ENCODE measurements at regions of chr15 and their contacts with region 1.

Region 1: DNA sequence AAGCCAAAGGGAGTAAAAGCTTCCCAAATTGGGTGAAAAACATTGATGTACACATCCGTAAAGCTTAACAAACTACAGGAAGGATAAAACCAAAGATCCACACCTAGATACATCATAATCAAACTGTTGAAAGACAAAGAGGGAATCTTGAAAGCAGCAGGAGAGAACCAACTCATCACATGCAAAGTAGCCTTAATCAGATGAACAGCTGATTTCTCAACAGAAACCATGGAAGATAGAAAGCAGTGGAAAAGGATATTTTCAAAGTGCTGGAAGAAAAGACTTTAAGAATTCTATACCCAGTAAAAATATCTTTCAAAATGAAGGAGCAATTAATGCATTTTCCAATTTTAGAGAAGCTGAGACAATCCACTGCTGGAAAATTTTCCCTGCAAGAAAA is 36.8 kb downstream of the CHRNA7 start:
- DNase-seq: no peak
- ATAC-seq: no peak
- H3K4me3 ChIP-seq: no peak overlapping the region
- H3K27ac ChIP-seq: no peak overlapping the region
- H3K4me1 ChIP-seq: no peaks in the 10 kb centered on the region
- H3K27me3 ChIP-seq: no peaks in the 10 kb centered on the region
- CTCF ChIP-seq: no peak

Region 2: GRCh38 chr15:32003558-32003957 is 63.6 kb before region 1 on chr15:
- intact Hi-C with region 1: loop called in 1 of 10 experiments (anchors 2 kb)
- DNase-seq: no peak
- ATAC-seq: no peak
- H3K4me3 ChIP-seq: no peak overlapping the region
- H3K27ac ChIP-seq: no peak overlapping the region
- H3K4me1 ChIP-seq: no peaks in the 10 kb centered on the region
- H3K27me3 ChIP-seq: peaks cover 0 to 7% (median 0%) of the 10 kb centered on the region in 7 donors
- CTCF ChIP-seq: no peak